B cell (primary cell): ENCODE measurements at regions of chr2 and their contacts with region 1.

Region 1: DNA sequence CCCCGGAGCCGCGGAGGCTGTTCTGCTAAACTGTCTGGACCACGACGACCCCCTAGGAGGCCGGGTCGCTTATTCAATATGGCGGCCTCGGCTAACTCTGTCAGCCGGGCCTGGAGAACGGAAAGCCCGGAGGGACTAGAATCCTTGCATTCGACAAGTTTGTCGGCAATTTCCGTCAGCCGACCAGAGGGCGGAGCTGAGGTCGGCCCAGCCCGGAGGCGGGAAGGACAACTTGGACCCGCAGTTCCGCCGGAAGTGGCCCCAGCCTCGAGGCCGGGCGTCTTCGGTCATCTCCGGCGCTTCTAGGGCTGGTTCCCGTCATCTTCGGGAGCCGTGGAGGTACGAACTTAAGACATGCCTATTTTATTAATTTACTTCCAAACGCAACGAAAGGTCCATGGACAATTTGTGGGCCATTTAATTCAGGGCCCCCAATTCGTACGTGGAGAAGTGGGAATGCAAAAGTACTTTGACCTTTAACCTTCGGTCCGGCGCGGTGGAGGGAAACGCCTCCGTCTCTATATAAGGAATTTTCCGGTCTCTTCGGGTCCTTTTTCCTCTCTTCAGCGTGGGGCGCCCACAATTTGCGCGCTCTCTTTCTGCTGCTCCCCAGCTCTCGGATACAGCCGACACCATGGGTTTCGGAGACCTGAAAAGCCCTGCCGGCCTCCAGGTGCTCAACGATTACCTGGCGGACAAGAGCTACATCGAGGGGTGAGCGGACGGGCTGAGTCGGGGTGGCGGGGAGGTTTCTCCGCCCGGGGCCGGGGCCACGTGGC is at the starts of genes EEF1B2 and NDUFS1:
- DNase-seq: peak; percentile 97
- ATAC-seq: peak; percentile 86
- H3K4me3 ChIP-seq: peak within 1 kb of the TSS; percentile 70 to 97 (median 76)
- H3K4me3 Mint-ChIP-seq: peak within 1 kb of the TSS; percentile 90
- H3K27ac ChIP-seq: peak within 1 kb of the TSS; percentile 75 to 90
- H3K27ac Mint-ChIP-seq: peak within 1 kb of the TSS; percentile 93
- H3K4me1 ChIP-seq: peaks cover 17 to 23% of the 10 kb centered on the region in 2 donors
- H3K4me1 Mint-ChIP-seq: peaks cover 44% of the 10 kb centered on the region
- H3K27me3 ChIP-seq: no peaks in the 10 kb centered on the region
- H3K27me3 Mint-ChIP-seq: no peaks in the 10 kb centered on the region
- CTCF ChIP-seq: no peak
- total RNA-seq, gene EEF1B2: 813 and 862 TPM in 2 replicates
- total RNA-seq, gene NDUFS1: 42.4 and 46.3 TPM in 2 replicates

Region 2: DNA sequence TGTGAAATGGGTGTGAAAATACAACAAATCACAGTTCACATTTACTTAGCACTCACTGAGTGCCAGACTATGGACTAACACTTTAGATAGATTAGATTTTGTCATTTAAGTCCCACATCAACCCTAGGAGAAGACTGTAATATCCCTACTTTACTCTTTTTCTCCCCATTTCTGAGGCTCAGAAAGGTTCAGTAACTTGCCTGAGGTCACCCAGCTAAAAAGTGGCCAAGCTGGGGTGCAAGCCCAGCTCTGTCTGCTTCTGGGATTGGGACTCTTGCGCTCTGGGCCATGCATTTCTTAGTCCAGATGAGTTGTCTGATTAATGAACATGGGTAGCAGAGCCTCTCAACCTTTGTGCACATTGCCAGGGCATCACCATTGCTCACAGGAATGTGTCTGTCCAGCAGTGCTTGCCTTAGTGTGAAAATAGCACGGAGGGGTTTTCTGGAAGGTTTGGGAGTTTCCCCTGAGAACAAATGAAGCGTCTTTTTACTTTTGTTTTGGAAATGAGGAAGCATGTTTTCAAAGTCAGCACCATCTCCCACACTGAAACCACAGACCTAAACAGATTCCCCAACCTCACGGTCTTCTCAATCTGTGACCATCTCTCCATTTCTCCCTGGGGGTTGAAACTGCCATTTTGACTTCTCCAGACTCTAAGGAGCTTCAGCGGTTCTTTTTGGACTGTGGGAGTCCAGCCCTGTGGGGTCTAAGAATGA is 445.3 kb before region 1 on chr2:
- CTCF ChIA-PET with region 1: no interaction called
- POLR2A ChIA-PET with region 1: no interaction called
- intact Hi-C with region 1: no loop called
- DNase-seq: peak; percentile 81
- ATAC-seq: peak; percentile 67
- H3K4me3 ChIP-seq: peak overlapping the region in 1 of 5 experiments; percentile 12
- H3K4me3 Mint-ChIP-seq: peak overlapping the region; percentile 32
- H3K27ac ChIP-seq: peak overlapping the region; percentile 66 to 73
- H3K27ac Mint-ChIP-seq: peak overlapping the region; percentile 85
- H3K4me1 ChIP-seq: peaks cover 34 to 38% of the 10 kb centered on the region in 2 donors
- H3K4me1 Mint-ChIP-seq: peaks cover 40% of the 10 kb centered on the region
- H3K27me3 ChIP-seq: no peaks in the 10 kb centered on the region
- H3K27me3 Mint-ChIP-seq: no peaks in the 10 kb centered on the region
- CTCF ChIP-seq: no peak

Region 3: DNA sequence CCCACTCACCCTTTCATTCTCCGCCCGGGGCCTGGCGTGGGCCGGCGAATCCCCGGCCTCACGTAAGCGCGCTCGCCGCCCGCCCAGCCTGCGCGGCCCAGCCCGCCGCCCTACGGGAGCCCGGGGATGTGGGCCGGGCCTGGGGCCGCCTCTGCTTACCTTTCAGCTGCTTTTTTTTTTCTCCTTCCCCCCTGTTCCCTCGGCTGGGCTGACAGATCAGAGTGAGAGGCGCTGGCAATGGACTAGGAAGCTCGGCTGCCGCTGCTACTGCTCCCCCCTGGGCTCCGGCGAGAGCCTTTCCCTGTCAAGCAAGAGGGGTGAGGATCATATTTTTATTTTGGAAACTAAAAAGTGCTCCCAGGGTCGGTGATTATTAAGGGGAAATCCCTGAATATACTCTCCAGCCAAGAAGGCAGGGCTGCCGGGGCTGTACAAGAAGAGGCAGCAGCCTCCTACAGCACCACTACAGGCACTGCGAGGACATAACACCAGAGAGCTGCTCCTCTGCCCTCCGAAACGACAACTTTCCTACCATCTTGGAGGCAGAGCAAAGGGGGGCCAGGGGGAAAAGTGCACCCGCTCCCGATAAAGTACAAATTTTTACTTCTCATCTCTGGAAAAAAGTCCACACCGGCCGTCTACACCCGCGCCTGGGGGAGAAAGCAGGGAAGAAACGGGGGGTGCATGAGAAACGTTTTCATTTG is 73.6 kb before region 1 on chr2 and contains the start of gene INO80D:
- CTCF ChIA-PET with region 1: interaction called, 4 read pairs
- POLR2A ChIA-PET with region 1: interaction called, 8 read pairs
- intact Hi-C with region 1: loop called (anchors 1 kb)
- DNase-seq: peak; percentile 91
- ATAC-seq: peak; percentile 84
- H3K4me3 ChIP-seq: peak within 1 kb of the TSS; percentile 68 to 95 (median 88)
- H3K4me3 Mint-ChIP-seq: peak within 1 kb of the TSS; percentile 99
- H3K27ac ChIP-seq: peak within 1 kb of the TSS; percentile 96 to 97
- H3K27ac Mint-ChIP-seq: peak within 1 kb of the TSS; percentile 100
- H3K4me1 ChIP-seq: peaks cover 19% of the 10 kb centered on the region in 2 donors
- H3K4me1 Mint-ChIP-seq: peaks cover 43% of the 10 kb centered on the region
- H3K27me3 ChIP-seq: no peaks in the 10 kb centered on the region
- H3K27me3 Mint-ChIP-seq: no peaks in the 10 kb centered on the region
- CTCF ChIP-seq: peak; percentile 67
- total RNA-seq, gene INO80D: 61.2 and 69.1 TPM in 2 replicates

Region 4: GRCh38 chr2:206173147-206173546 is 13.6 kb after region 1 on chr2:
- CTCF ChIA-PET with region 1: no interaction called
- POLR2A ChIA-PET with region 1: no interaction called
- intact Hi-C with region 1: no loop called
- DNase-seq: no peak
- ATAC-seq: no peak
- H3K4me3 ChIP-seq: no peak overlapping the region
- H3K4me3 Mint-ChIP-seq: no peak overlapping the region
- H3K27ac ChIP-seq: no peak overlapping the region
- H3K27ac Mint-ChIP-seq: no peak overlapping the region
- H3K4me1 ChIP-seq: no peaks in the 10 kb centered on the region
- H3K4me1 Mint-ChIP-seq: no peaks in the 10 kb centered on the region
- H3K27me3 ChIP-seq: no peaks in the 10 kb centered on the region
- H3K27me3 Mint-ChIP-seq: no peaks in the 10 kb centered on the region
- CTCF ChIP-seq: no peak

Region 5: GRCh38 chr2:206260188-206261012 is 100.9 kb after region 1 on chr2:
- CTCF ChIA-PET with region 1: interaction called, 10 read pairs
- POLR2A ChIA-PET with region 1: no interaction called
- intact Hi-C with region 1: no loop called
- DNase-seq: peak; percentile 53
- ATAC-seq: peak; percentile 43
- H3K4me3 ChIP-seq: no peak overlapping the region
- H3K4me3 Mint-ChIP-seq: no peak overlapping the region
- H3K27ac ChIP-seq: no peak overlapping the region
- H3K27ac Mint-ChIP-seq: no peak overlapping the region
- H3K4me1 ChIP-seq: peaks cover 12% of the 10 kb centered on the region in 2 donors
- H3K4me1 Mint-ChIP-seq: peaks cover 16% of the 10 kb centered on the region
- H3K27me3 ChIP-seq: peaks cover 0 to 81% (median 60%) of the 10 kb centered on the region in 4 experiments
- H3K27me3 Mint-ChIP-seq: peaks cover 63% of the 10 kb centered on the region
- CTCF ChIP-seq: peak; percentile 59

Region 6: DNA sequence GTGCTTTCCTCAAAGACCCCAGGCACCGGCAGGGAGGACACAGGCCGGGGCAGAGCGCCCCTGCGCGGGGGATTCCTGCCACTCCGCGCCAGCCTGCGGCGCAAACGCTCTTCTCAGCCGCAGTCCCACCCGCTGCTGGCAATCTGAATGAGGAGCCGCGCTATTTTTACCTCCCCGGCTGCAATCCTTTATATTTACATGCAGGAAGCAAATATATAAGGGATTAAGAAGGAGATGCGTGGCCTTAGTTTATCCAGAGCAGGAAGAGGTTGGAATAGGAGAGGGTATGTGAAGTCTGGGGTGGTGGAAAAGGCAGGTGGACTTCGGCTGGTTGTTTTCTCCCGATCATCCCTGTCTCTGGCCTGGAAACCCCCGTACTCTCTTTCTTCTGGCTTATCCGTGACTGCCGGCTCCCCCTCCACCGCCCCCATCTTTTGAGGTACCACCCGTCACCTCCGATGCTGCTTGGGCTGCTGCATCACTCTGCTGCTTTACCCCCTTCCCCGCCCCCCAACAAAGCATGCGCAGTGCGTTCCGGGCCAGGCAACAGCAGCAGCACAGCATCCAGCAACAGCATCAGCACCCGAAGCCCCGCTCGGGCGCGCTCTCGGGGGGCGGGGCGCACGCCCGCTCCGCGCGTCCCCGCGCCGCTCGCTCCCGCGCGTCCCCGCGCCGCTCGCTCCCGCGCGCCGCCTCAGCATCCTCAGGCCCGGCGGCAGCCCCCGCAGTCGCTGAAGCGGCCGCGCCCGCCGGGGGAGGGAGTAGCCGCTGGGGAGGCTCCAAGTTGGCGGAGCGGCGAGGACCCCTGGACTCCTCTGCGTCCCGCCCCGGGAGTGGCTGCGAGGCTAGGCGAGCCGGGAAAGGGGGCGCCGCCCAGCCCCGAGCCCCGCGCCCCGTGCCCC is 283.5 kb after region 1 on chr2 and contains the start of gene ADAM23:
- CTCF ChIA-PET with region 1: no interaction called
- POLR2A ChIA-PET with region 1: no interaction called
- intact Hi-C with region 1: loop called (anchors 5 kb)
- DNase-seq: peak; percentile 56
- ATAC-seq: peak; percentile 64
- H3K4me3 ChIP-seq: peak within 1 kb of the TSS; percentile 31 to 54 (median 43)
- H3K4me3 Mint-ChIP-seq: peak within 1 kb of the TSS; percentile 93
- H3K27ac ChIP-seq: no peak within 1 kb of the TSS
- H3K27ac Mint-ChIP-seq: peak within 1 kb of the TSS; percentile 32
- H3K4me1 ChIP-seq: peaks cover 15 to 21% of the 10 kb centered on the region in 2 donors
- H3K4me1 Mint-ChIP-seq: peaks cover 18% of the 10 kb centered on the region
- H3K27me3 ChIP-seq: peaks cover 0 to 27% (median 17%) of the 10 kb centered on the region in 4 experiments
- H3K27me3 Mint-ChIP-seq: peaks cover 69% of the 10 kb centered on the region
- CTCF ChIP-seq: no peak
- total RNA-seq, gene ADAM23: 1.3 and 1.7 TPM in 2 replicates

Region 7: GRCh38 chr2:206783718-206784117 is 624.2 kb after region 1 on chr2:
- CTCF ChIA-PET with region 1: no interaction called
- POLR2A ChIA-PET with region 1: no interaction called
- intact Hi-C with region 1: loop called (anchors 5 kb)
- DNase-seq: no peak
- ATAC-seq: no peak
- H3K4me3 ChIP-seq: no peak overlapping the region
- H3K4me3 Mint-ChIP-seq: no peak overlapping the region
- H3K27ac ChIP-seq: no peak overlapping the region
- H3K27ac Mint-ChIP-seq: no peak overlapping the region
- H3K4me1 ChIP-seq: no peaks in the 10 kb centered on the region
- H3K4me1 Mint-ChIP-seq: no peaks in the 10 kb centered on the region
- H3K27me3 ChIP-seq: no peaks in the 10 kb centered on the region
- H3K27me3 Mint-ChIP-seq: no peaks in the 10 kb centered on the region
- CTCF ChIP-seq: peak; percentile 11